ENCODE measurements at regions of chr1 and their contacts with region 1.

Region 1: GRCh38 chr1:235971571-235972310 is 93.1 kb downstream of the NID1 start:
- H3K4me3 ChIP-seq: no peak overlapping the region
- H3K27ac ChIP-seq: no peak overlapping the region
- H3K4me1 ChIP-seq: no peaks in the 10 kb centered on the region; the same call in 1 of the 2 replicates
- CTCF ChIP-seq: peak; percentile 94

Region 2: DNA sequence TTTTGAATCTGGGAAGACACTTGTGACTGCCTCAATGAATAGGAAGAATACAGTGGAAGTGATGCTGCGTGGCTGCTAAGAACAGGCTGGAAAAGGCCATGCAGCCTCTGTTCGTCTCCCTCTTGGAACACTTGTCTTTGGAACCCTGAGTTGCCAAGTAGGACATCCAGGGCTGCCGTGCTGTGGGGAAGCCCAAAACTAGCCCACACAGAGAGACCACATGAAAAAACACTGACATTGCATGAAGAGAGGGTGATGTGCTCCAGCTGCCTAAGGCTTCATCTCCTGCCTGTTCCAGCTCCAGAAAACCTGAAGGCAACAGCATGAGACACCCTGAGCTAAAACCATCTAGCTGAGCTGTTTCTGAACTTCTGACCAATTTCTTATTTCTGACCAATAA is 261.1 kb before region 1 on chr1:
- CTCF ChIA-PET with region 1: interaction called, 10 read pairs
- POLR2A ChIA-PET with region 1: no interaction called
- H3K4me3 ChIP-seq: no peak overlapping the region
- H3K27ac ChIP-seq: no peak overlapping the region
- H3K4me1 ChIP-seq: no peaks in the 10 kb centered on the region
- CTCF ChIP-seq: no peak

Region 3: GRCh38 chr1:235791532-235792060 is 180.1 kb before region 1 on chr1:
- CTCF ChIA-PET with region 1: interaction called, 10 read pairs
- POLR2A ChIA-PET with region 1: no interaction called
- H3K4me3 ChIP-seq: no peak overlapping the region
- H3K27ac ChIP-seq: no peak overlapping the region
- H3K4me1 ChIP-seq: peaks cover 9% of the 10 kb centered on the region
- CTCF ChIP-seq: no peak

Region 4: DNA sequence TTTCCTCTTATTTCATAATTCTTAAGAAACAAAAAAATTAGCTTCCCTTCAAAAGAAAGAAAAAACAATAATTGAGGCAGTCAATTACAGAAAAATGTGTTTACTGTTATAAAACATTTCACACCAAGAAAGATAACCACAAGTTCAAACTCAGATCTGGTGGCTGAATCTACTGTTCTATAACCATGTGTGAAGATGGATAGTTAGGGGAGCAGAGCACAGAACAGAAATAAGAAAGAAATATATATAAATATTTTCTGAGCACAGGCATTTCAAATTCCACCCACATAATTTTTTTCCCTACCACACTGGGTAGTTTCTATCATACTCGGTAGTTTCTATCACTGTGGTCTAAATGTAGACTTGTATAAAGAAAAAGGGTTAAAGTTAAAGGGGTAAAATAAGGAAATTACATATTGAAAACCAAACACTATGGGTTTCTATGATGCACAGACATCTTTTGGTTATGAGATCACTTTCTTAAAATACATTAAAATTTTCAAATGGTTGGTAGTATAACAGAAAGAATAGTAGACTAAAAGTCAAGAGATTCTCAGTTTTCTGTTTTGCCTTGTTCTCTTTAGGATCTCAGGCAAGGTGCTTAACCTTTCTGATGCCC is 115.8 kb before region 1 on chr1:
- CTCF ChIA-PET with region 1: interaction called, 10 read pairs
- POLR2A ChIA-PET with region 1: no interaction called
- H3K4me3 ChIP-seq: no peak overlapping the region
- H3K27ac ChIP-seq: no peak overlapping the region
- H3K4me1 ChIP-seq: peaks cover 5% of the 10 kb centered on the region; the same call in 1 of the 2 replicates
- CTCF ChIP-seq: no peak

Region 5: GRCh38 chr1:235917267-235917811 is 54.4 kb before region 1 on chr1:
- CTCF ChIA-PET with region 1: interaction called, 32 read pairs
- POLR2A ChIA-PET with region 1: interaction called, 3 read pairs
- H3K4me3 ChIP-seq: no peak overlapping the region
- H3K27ac ChIP-seq: peak overlapping the region; percentile 62
- H3K4me1 ChIP-seq: peaks cover 14% of the 10 kb centered on the region
- CTCF ChIP-seq: no peak

Region 6: DNA sequence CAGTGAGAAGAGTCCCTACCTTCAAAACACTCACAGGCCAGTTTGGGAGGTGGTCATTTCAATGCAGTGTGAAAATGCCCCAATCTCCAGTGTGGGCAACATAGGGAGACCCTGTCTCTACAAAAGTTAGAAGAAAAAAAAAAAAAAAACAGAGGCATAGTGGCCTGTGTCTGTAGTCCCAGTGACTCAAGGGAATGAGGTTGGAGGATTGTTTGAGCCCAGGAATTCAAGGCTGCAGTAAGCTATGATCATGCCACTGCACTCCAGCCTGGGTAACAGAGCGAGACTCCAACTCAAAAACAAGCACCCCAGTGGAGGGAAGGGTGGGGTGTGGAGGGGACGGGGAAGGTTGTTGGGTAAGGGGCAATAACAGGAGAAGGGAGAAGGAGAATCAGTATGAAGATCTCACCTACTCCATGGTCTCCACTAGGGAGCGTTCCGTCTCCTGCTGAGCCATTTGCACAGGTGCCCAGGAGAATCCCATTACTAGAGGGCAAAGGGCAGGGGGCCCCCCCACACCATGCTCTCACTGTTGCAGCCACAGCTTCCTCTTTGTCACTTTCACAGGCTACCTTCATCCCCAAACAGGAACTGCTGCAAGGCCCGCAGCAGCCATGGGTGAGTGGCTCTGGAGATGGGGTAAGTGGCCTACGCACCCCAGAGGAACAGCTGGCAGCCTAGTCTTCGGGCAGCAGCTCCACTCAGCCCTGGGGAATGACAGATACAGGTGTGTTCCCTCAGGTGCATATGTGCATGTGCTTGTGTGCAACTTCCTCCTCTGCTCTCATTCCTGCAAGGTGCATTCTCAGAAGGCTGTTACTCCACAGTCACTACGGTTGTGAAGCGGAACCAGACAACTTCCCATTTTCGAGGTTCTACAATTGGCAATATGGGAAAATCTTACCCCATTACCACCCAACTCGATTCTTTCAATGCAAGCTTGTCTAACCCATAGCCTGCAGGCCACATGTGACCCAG is 17.1 kb before region 1 on chr1:
- CTCF ChIA-PET with region 1: interaction called, 83 read pairs
- POLR2A ChIA-PET with region 1: interaction called, 3 read pairs
- H3K4me3 ChIP-seq: no peak overlapping the region
- H3K27ac ChIP-seq: no peak overlapping the region
- H3K4me1 ChIP-seq: no peaks in the 10 kb centered on the region
- CTCF ChIP-seq: no peak

Region 7: GRCh38 chr1:236007781-236008180 is 36.0 kb after region 1 on chr1:
- CTCF ChIA-PET with region 1: interaction called, 14 read pairs
- POLR2A ChIA-PET with region 1: no interaction called
- H3K4me3 ChIP-seq: no peak overlapping the region
- H3K27ac ChIP-seq: no peak overlapping the region
- H3K4me1 ChIP-seq: no peaks in the 10 kb centered on the region
- CTCF ChIP-seq: no peak